ENCODE measurements at regions of chr11 and their contacts with region 1.

Region 1: GRCh38 chr11:6022956-6023355 is 7.6 kb downstream of the OR56A1 start:
- DNase-seq: peak; percentile 43
- ATAC-seq: peak; percentile 70
- H3K4me3 ChIP-seq: no peak overlapping the region
- H3K27ac ChIP-seq: no peak overlapping the region
- H3K4me1 ChIP-seq: no peaks in the 10 kb centered on the region
- H3K27me3 ChIP-seq: no peaks in the 10 kb centered on the region
- CTCF ChIP-seq: peak; percentile 74
- EP300 ChIP-seq: no peak
- POLR2A ChIP-seq: no peak
- RAD21 ChIP-seq: peak; percentile 33; the same call in 1 of the 2 replicates

Region 2: DNA sequence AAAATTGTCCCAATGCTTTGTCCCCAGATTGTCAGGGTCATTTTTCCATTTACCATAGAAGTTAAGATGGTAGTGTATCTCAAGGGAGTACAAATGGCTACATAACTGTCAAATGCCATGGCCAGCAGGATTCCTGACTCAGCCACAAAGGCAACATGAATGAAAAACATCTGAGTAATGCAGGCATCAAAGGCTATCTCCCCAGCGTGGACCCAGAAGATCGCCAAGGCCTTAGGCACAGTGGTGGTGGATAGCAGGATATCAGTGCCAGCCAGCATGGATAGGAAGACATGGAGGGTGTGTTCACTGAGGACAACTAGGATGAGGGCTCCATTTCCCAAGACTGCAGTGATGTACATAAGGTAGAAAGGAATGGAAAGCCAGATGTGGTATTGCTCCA is 129.1 kb after region 1 on chr11:
- CTCF ChIA-PET with region 1: no interaction called
- POLR2A ChIA-PET with region 1: no interaction called
- in situ Hi-C with region 1: no loop called
- intact Hi-C with region 1: no loop called
- DNase-seq: no peak
- ATAC-seq: no peak
- H3K4me3 ChIP-seq: no peak overlapping the region
- H3K27ac ChIP-seq: no peak overlapping the region
- H3K4me1 ChIP-seq: peaks cover 18% of the 10 kb centered on the region
- H3K27me3 ChIP-seq: no peaks in the 10 kb centered on the region
- CTCF ChIP-seq: no peak
- EP300 ChIP-seq: no peak
- POLR2A ChIP-seq: no peak
- RAD21 ChIP-seq: no peak

Region 3: DNA sequence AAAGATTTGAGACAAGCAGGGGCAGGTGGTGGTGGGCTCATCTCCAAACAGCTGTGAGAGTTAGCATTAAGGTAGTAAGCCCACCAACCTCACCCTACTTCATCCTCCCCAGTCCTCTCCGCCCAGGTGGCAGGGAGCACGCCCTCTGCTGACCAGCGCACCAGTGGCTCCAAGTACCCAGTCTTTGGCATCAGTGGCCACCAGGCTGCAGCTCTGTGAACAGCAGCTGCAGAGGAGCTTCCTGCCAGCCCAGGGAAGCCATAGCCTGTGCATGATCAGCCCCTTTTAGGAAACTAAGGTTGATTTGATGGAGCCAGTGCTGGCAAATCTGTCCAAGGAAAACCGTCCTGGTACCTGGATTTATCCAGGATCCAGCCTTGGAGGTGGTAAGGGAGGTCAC is 275.6 kb after region 1 on chr11:
- CTCF ChIA-PET with region 1: interaction called, 14 read pairs
- POLR2A ChIA-PET with region 1: no interaction called
- in situ Hi-C with region 1: no loop called
- intact Hi-C with region 1: loop called (anchors 1 kb)
- DNase-seq: peak; percentile 38
- ATAC-seq: peak; percentile 100
- H3K4me3 ChIP-seq: no peak overlapping the region
- H3K27ac ChIP-seq: no peak overlapping the region
- H3K4me1 ChIP-seq: no peaks in the 10 kb centered on the region
- H3K27me3 ChIP-seq: peaks cover under 1% of the 10 kb centered on the region in 2 experiments; a peak in 3 of 5 replicates
- CTCF ChIP-seq: peak; percentile 84
- EP300 ChIP-seq: no peak
- POLR2A ChIP-seq: no peak
- RAD21 ChIP-seq: no peak

Region 4: DNA sequence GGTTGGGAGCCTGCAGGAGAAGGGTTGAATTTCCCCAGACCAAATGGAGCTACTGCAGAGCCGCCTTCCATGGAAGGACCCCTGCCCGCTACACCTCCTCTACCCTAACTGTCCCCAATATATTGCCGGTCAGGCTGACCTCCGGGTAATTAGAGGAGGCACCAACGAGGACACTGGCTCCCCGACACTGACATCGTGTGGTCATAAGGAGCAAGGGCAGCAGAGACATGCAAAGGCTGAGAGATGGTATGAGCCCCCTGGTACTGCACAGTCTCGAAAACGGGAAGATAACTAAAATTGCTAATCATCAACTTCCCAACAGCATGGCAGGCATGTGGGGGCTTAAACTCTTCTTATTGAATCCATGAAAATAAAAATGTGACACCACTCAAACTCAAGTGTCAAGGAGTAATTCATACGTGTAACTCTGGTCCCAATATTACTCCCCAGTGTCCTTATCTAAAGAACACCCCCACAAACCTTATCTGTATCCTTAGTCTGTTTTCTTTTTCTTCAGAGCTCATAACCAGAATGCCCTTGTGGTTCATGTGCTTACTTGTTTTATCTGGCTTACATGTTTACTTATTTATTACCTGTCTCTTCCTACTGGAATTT is 293.0 kb after region 1 on chr11:
- CTCF ChIA-PET with region 1: interaction called, 12 read pairs
- POLR2A ChIA-PET with region 1: no interaction called
- in situ Hi-C with region 1: loop called (anchors 10 kb)
- intact Hi-C with region 1: loop called (anchors 1 kb)
- DNase-seq: peak; percentile 45
- ATAC-seq: peak; percentile 98
- H3K4me3 ChIP-seq: no peak overlapping the region
- H3K27ac ChIP-seq: no peak overlapping the region
- H3K4me1 ChIP-seq: no peaks in the 10 kb centered on the region
- H3K27me3 ChIP-seq: peaks cover 1 to 36% of the 10 kb centered on the region in 2 experiments; a peak in 3 of 5 replicates
- CTCF ChIP-seq: peak; percentile 89
- EP300 ChIP-seq: no peak
- POLR2A ChIP-seq: no peak
- RAD21 ChIP-seq: 0 out of 2 replicates have a peak, but pooled peaks have one; percentile 30